Panc1 (cell line): ENCODE measurements at regions of chr21 and their contacts with region 1.

Region 1: DNA sequence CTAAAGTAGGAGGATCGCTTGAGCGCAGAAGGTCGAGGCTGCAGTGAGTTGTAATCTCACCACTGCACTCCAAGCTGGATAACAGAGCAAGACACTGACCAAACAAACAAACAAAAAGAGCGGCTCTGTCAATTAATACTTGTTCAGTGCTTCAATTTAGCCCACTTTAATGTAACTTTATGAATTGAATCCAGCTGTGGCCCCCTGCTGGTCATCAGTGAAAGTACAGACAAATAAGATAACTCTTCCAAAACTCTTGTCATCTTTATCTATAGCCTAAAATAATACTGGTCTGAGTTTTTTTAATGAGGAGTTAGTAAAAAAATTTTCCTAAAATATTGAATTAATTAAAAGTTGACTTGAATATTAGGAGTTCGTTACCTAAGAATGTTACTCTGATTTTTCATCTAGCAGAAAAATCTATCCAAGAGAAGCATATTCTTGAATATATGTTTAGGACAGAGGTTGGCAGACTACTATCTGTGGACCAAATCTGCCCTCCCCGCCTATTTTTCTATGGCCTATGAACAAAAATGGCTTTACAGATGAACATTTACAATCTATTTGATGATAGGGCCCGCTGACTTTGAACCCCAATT is 26.1 kb downstream of the ATP5PF start:
- DNase-seq: peak; percentile 22
- ATAC-seq: no peak
- H3K4me3 ChIP-seq: no peak overlapping the region
- H3K27ac ChIP-seq: no peak overlapping the region
- H3K4me1 ChIP-seq: no peaks in the 10 kb centered on the region
- H3K27me3 ChIP-seq: no peaks in the 10 kb centered on the region
- CTCF ChIP-seq: peak; percentile 79

Region 2: DNA sequence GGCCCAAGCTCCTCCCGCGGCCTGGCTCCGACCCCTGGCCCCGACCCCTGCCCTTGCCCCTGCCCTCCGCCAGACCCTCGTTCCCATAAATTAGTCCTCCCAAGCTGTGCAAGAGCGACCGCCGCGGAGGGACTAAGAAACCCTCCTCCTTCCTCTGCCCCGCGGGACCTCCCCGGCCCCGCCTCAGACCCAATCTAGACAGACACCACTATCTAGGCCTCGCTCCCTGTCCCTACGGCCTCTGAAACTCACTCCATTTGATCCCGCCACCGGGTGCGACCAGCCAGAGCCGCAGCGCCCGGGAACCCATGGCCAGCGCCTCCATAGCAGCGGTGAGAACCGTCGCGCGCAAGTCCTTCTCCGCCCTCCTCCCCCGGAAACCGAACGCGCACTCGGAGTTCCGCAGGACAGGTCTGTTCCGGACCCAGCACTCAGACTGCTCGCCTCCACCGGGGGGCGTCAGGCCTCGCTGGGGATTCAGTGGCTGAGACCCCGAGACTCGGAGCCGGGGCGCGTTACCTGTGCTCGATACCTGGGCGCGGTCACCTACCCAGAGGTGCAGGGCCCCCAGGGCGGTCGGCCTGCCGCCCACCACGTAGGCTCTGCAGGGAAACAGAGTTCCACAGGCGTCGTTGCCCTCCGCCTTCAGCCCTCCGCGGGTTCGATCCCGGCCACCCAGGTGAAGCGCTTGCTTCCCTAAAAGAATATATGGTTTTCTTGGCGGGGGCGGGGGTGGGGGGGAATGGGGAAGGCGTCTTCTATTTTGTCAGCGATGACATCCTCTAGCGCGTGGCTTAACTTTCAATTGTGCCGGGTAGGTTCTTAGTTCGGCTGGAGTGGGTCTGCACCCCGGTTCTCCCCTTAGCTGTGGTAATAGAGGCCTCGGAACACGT is 101.2 kb before region 1 on chr21 and contains the start of gene MRPL39:
- CTCF ChIA-PET with region 1: interaction called, 3 read pairs
- POLR2A ChIA-PET with region 1: no interaction called
- in situ Hi-C with region 1: no loop called
- intact Hi-C with region 1: loop called (anchors 1 kb)
- DNase-seq: peak; percentile 52
- ATAC-seq: peak; percentile 98
- H3K4me3 ChIP-seq: peak within 1 kb of the TSS; percentile 79 to 80
- H3K27ac ChIP-seq: peak within 1 kb of the TSS; percentile 79
- H3K4me1 ChIP-seq: peaks cover 4% of the 10 kb centered on the region; the same call in 1 of the 2 replicates
- H3K27me3 ChIP-seq: no peaks in the 10 kb centered on the region
- CTCF ChIP-seq: peak; percentile 63
- total RNA-seq, gene MRPL39: 24.7 TPM